Activated T-helper 2 cell treated with anti-CD3 and anti-CD28 coated beads, Interferon-gamma antibody, Interleukin-2, Interleukin-4, amounts not matched to agents 10 μg/mL and 5 μg/mL and 100 μg/mL, durations not matched to agents 14 hours and 24 hours and 36 hours (primary cell): ENCODE measurements at regions of chr6 and their contacts with region 1.

Region 1: GRCh38 chr6:165729307-165729936 is 66.4 kb upstream of the PDE10A start:
- DNase-seq: no peak
- H3K4me3 Mint-ChIP-seq: no peak overlapping the region
- H3K27ac Mint-ChIP-seq: no peak overlapping the region
- H3K4me1 Mint-ChIP-seq: no peaks in the 10 kb centered on the region
- H3K27me3 Mint-ChIP-seq: no peaks in the 10 kb centered on the region

Region 2: GRCh38 chr6:165439928-165440554 is 289.4 kb before region 1 on chr6:
- intact Hi-C with region 1: loop called (anchors 2 kb)
- DNase-seq: no peak
- H3K4me3 Mint-ChIP-seq: no peak overlapping the region
- H3K27ac Mint-ChIP-seq: no peak overlapping the region
- H3K4me1 Mint-ChIP-seq: no peaks in the 10 kb centered on the region
- H3K27me3 Mint-ChIP-seq: no peaks in the 10 kb centered on the region

Region 3: GRCh38 chr6:165744555-165745228 is 15.3 kb after region 1 on chr6:
- intact Hi-C with region 1: no loop called
- DNase-seq: no peak
- H3K4me3 Mint-ChIP-seq: no peak overlapping the region
- H3K27ac Mint-ChIP-seq: no peak overlapping the region
- H3K4me1 Mint-ChIP-seq: peaks cover 12% of the 10 kb centered on the region
- H3K27me3 Mint-ChIP-seq: no peaks in the 10 kb centered on the region

Region 4: GRCh38 chr6:165774903-165775601 is 45.6 kb after region 1 on chr6:
- intact Hi-C with region 1: loop called (anchors 5 kb)
- DNase-seq: no peak
- H3K4me3 Mint-ChIP-seq: no peak overlapping the region
- H3K27ac Mint-ChIP-seq: no peak overlapping the region
- H3K4me1 Mint-ChIP-seq: peaks cover 4% of the 10 kb centered on the region
- H3K27me3 Mint-ChIP-seq: peaks cover 16% of the 10 kb centered on the region

Region 5: GRCh38 chr6:165850434-165851019 is 121.1 kb after region 1 on chr6:
- intact Hi-C with region 1: loop called (anchors 2 kb)
- DNase-seq: peak; percentile 37
- H3K4me3 Mint-ChIP-seq: no peak overlapping the region
- H3K27ac Mint-ChIP-seq: no peak overlapping the region
- H3K4me1 Mint-ChIP-seq: peaks cover 18% of the 10 kb centered on the region
- H3K27me3 Mint-ChIP-seq: peaks cover 38% of the 10 kb centered on the region

Region 6: GRCh38 chr6:166045173-166045859 is 315.9 kb after region 1 on chr6:
- intact Hi-C with region 1: no loop called
- DNase-seq: no peak
- H3K4me3 Mint-ChIP-seq: no peak overlapping the region
- H3K27ac Mint-ChIP-seq: no peak overlapping the region
- H3K4me1 Mint-ChIP-seq: no peaks in the 10 kb centered on the region
- H3K27me3 Mint-ChIP-seq: no peaks in the 10 kb centered on the region